A673 (cell line): ENCODE measurements at regions of chr1 and their contacts with region 1.

Region 1: DNA sequence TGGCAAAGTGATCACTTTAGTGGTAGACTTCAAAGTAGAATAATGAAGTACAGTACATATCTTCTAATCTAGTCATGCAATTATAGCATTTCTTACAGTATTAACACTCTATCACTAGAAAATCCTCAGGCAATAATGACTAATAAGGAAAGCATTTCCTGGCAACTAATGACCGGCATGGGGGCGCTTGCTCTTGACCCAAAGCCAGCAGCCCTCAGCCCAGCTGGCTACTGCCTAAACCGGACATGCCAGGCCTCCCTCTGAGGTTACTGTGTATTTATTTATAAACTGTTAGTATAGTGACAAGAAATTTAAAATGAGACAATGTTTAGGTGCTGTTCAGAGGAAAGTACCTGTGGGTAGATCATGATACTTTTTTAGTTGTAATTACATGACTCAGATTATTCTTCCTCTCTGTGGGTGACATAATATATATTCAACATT is 633.8 kb downstream of the PTPRC start:
- DNase-seq: peak; percentile 91
- H3K4me3 ChIP-seq: no peak overlapping the region
- H3K27ac ChIP-seq: peak overlapping the region; percentile 78
- H3K4me1 ChIP-seq: peaks cover 24% of the 10 kb centered on the region
- H3K27me3 ChIP-seq: no peaks in the 10 kb centered on the region
- CTCF ChIP-seq: no peak

Region 2: GRCh38 chr1:199226163-199226562 is 46.5 kb before region 1 on chr1:
- CTCF ChIA-PET with region 1: no interaction called
- POLR2A ChIA-PET with region 1: no interaction called
- intact Hi-C with region 1: loop called (anchors 2 kb)
- DNase-seq: peak; percentile 88
- H3K4me3 ChIP-seq: no peak overlapping the region
- H3K27ac ChIP-seq: peak overlapping the region; percentile 90
- H3K4me1 ChIP-seq: peaks cover 28% of the 10 kb centered on the region
- H3K27me3 ChIP-seq: no peaks in the 10 kb centered on the region
- CTCF ChIP-seq: no peak

Region 3: GRCh38 chr1:199510314-199510713 is 237.6 kb after region 1 on chr1:
- CTCF ChIA-PET with region 1: no interaction called
- POLR2A ChIA-PET with region 1: no interaction called
- intact Hi-C with region 1: no loop called
- DNase-seq: no peak
- H3K4me3 ChIP-seq: no peak overlapping the region
- H3K27ac ChIP-seq: no peak overlapping the region
- H3K4me1 ChIP-seq: no peaks in the 10 kb centered on the region
- H3K27me3 ChIP-seq: no peaks in the 10 kb centered on the region
- CTCF ChIP-seq: no peak

Region 4: GRCh38 chr1:199522936-199523335 is 250.3 kb after region 1 on chr1:
- CTCF ChIA-PET with region 1: no interaction called
- POLR2A ChIA-PET with region 1: no interaction called
- intact Hi-C with region 1: no loop called
- DNase-seq: no peak
- H3K4me3 ChIP-seq: no peak overlapping the region
- H3K27ac ChIP-seq: no peak overlapping the region
- H3K4me1 ChIP-seq: no peaks in the 10 kb centered on the region
- H3K27me3 ChIP-seq: no peaks in the 10 kb centered on the region
- CTCF ChIP-seq: no peak